ENCODE measurements at regions of chr12 and their contacts with region 1.

Region 1: DNA sequence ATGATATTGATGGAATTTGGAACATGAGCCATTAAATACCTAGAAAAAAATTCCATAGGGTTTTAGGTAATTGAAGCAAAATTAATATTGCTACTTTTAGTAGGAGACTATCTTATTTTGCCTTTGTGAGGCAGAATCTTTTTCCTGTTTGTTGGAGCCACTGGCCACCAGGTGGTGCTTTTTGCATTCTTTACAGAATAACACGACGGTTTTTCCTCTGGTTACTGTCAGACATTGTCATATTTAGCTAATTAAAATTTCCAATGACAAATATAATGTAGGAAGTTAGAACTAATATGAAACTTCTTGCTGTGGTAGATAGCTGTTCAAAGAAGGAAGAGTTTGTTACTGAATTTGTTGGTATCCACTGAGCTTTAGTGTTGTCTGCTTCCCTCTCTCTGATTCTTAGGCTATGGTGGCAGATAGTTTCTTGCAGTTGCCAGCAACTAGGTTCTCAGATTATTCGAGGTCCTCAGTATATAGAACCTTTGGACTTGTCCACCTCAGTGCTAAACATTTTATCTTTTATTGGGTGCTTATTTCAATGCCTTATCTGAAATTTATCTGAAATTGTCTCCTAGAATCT is 25.7 kb downstream of the RAB21 start:
- DNase-seq: no peak
- H3K4me3 ChIP-seq: no peak overlapping the region
- H3K27ac ChIP-seq: no peak overlapping the region
- H3K4me1 ChIP-seq: peaks cover 30% of the 10 kb centered on the region
- H3K27me3 ChIP-seq: no peaks in the 10 kb centered on the region
- CTCF ChIP-seq: peak; percentile 79

Region 2: DNA sequence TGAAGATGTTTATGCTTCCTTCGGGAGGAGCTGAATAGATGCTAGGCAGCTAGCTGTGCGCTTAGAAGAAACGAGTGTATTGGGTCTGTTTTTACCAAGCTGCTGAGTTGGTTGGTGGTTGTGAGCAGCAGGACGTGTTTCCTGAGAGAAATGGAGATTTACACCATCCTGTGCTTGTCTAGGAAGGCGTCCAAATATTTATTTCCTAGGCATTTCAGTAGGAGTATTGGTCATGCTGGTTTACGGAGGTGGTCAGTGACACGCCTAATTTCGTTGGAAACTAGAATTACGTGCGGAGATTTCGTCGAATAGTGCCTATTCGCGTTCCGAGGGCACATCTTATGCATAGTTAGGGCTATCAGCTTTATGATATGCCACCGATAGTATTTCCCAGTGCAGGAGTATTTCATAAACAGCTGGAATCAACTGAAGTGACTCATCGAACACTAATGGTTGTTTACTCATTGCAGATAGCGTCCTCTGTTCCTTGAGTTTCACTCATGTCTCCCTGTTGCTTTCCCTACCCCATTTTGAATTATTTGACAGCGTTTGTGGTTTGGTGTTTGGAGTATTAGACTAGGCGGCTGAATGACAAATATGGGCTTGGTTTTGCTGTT is 60.0 kb after region 1 on chr12:
- intact Hi-C with region 1: loop called (anchors 2 kb)
- DNase-seq: no peak
- H3K4me3 ChIP-seq: peak overlapping the region; percentile 84
- H3K27ac ChIP-seq: peak overlapping the region; percentile 95
- H3K4me1 ChIP-seq: peaks cover 65% of the 10 kb centered on the region
- H3K27me3 ChIP-seq: no peaks in the 10 kb centered on the region
- CTCF ChIP-seq: no peak

Region 3: DNA sequence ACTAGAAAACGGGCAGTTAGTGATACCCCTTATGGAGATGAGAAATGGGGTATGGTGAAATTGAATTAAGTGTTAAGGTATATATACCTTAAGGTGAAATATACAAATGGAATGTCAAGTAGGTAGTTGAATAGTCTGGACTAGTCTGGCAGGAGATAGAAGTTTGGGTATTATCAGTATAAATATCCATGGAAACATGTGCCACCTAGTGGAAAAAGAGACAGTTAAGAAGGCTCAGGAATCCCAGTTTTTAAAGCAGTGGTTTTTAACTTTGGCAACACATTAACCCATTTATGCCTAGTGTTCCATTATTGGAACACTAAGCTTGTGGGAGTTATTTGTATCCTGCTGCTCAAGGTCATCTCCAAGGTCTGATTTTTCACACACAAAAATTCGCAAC is 119.8 kb after region 1 on chr12:
- intact Hi-C with region 1: loop called (anchors 10 kb)
- DNase-seq: no peak
- H3K4me3 ChIP-seq: no peak overlapping the region
- H3K27ac ChIP-seq: no peak overlapping the region
- H3K4me1 ChIP-seq: no peaks in the 10 kb centered on the region
- H3K27me3 ChIP-seq: no peaks in the 10 kb centered on the region
- CTCF ChIP-seq: peak; percentile 33

Region 4: GRCh38 chr12:71935594-71935993 is 155.3 kb after region 1 on chr12:
- intact Hi-C with region 1: no loop called
- DNase-seq: no peak
- H3K4me3 ChIP-seq: no peak overlapping the region
- H3K27ac ChIP-seq: no peak overlapping the region
- H3K4me1 ChIP-seq: peaks cover 4% of the 10 kb centered on the region
- H3K27me3 ChIP-seq: peaks cover 22% of the 10 kb centered on the region
- CTCF ChIP-seq: no peak

Region 5: GRCh38 chr12:72098622-72099021 is 318.3 kb after region 1 on chr12:
- intact Hi-C with region 1: no loop called
- DNase-seq: no peak
- H3K4me3 ChIP-seq: no peak overlapping the region
- H3K27ac ChIP-seq: no peak overlapping the region
- H3K4me1 ChIP-seq: no peaks in the 10 kb centered on the region
- H3K27me3 ChIP-seq: no peaks in the 10 kb centered on the region
- CTCF ChIP-seq: no peak

Measured in left ventricle myocardium inferior (tissue), 1 donor.